Activated CD4-positive, alpha-beta T cell treated with anti-CD3 and anti-CD28 coated beads for 36 hours (primary cell): ENCODE measurements at regions of chr7 and their contacts with region 1.

Region 1: GRCh38 chr7:124349443-124349842 is 316.6 kb upstream of the TMEM229A start:
- DNase-seq: no peak
- ATAC-seq: no peak
- H3K4me3 Mint-ChIP-seq: no peak overlapping the region
- H3K27ac Mint-ChIP-seq: no peak overlapping the region
- H3K4me1 Mint-ChIP-seq: no peaks in the 10 kb centered on the region
- H3K27me3 Mint-ChIP-seq: no peaks in the 10 kb centered on the region

Region 2: DNA sequence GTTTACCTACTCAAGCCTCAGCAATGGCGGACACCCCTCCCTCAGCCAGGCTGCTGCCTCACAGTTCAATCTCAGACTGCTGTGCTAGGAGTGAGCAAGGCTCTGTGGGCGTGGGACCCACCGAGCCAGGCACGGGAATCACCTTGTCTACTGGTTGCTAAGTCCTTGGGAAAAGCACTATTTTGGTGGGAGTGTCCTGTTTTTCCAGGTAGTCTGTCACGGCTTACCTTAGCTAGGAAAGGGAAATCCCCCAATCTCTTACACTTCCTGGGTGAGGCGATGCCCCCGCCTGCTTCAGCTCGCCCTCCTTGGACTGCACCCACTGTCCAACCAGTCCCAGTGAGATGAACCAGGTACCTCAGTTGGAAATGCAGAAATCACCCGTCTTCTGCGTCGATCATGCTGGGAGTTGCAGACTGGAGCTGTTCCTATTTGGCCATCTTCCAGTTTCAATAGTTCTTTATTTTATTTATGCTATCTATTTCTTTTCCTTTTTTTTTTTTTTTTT is 504.7 kb before region 1 on chr7 and contains the start of gene HYAL4:
- CTCF ChIA-PET with region 1: no interaction called
- POLR2A ChIA-PET with region 1: no interaction called
- intact Hi-C with region 1: no loop called
- DNase-seq: no peak
- ATAC-seq: no peak
- H3K4me3 Mint-ChIP-seq: no peak within 1 kb of the TSS
- H3K27ac Mint-ChIP-seq: no peak within 1 kb of the TSS
- H3K4me1 Mint-ChIP-seq: no peaks in the 10 kb centered on the region
- H3K27me3 Mint-ChIP-seq: peaks cover 16% of the 10 kb centered on the region
- total RNA-seq, gene HYAL4: 0.25 TPM in 1 of 2 experiments, not detected in the other

Region 3: DNA sequence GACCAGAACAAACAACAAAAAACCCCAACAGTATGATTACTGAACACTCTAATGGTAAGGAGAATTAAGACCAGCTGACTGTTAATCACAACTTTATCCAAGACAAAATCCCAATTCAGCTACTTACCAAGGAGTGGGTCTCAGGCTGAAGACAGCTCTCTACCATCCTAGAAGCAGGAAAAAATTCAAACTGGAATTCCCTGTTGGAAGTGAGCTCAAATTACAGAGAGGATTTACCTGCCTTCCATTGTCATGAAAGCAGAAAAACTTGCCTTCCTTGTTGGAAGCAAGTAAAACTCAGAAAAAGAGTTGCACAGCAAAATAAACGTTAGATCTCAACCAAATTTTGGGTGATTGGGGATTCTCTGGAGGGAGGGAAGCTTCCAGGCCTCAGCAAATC is 403.5 kb before region 1 on chr7:
- CTCF ChIA-PET with region 1: no interaction called
- POLR2A ChIA-PET with region 1: no interaction called
- intact Hi-C with region 1: loop called in 1 of 2 experiments (anchors 5 kb)
- DNase-seq: no peak
- ATAC-seq: no peak
- H3K4me3 Mint-ChIP-seq: no peak overlapping the region
- H3K27ac Mint-ChIP-seq: no peak overlapping the region
- H3K4me1 Mint-ChIP-seq: no peaks in the 10 kb centered on the region
- H3K27me3 Mint-ChIP-seq: peaks cover 9% of the 10 kb centered on the region

Region 4: GRCh38 chr7:124032369-124033094 is 316.9 kb before region 1 on chr7 and contains the start of gene TMEM229A:
- CTCF ChIA-PET with region 1: no interaction called
- POLR2A ChIA-PET with region 1: no interaction called
- intact Hi-C with region 1: no loop called
- DNase-seq: peak; percentile 29
- ATAC-seq: peak; percentile 61
- H3K4me3 Mint-ChIP-seq: no peak within 1 kb of the TSS
- H3K27ac Mint-ChIP-seq: no peak within 1 kb of the TSS
- H3K4me1 Mint-ChIP-seq: peaks cover 5% of the 10 kb centered on the region
- H3K27me3 Mint-ChIP-seq: peaks cover 54% of the 10 kb centered on the region
- total RNA-seq, gene TMEM229A: not detected

Region 5: DNA sequence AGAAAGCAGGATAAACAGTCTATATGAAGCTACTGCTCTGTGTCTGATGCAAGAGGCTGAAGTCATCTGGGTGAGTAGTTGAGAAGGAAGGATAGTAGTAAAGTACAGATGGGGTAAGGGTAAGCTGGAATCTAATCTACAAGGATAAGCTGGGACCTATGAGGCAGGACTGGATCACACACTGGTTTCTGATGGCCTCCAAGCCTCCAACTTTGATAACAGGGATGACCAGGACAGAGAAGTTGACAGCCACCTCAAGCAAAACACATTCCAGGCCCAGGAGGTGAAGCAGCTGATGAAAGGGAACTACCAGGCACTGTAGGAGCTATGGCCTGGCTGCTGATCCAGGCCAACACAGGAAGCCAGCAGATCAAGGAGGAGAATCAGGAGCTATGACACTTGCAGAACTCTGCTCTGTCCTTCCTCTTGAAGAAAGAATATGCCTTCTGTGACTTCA is 38.5 kb before region 1 on chr7:
- CTCF ChIA-PET with region 1: no interaction called
- POLR2A ChIA-PET with region 1: no interaction called
- intact Hi-C with region 1: no loop called
- DNase-seq: no peak
- ATAC-seq: no peak
- H3K4me3 Mint-ChIP-seq: no peak overlapping the region
- H3K27ac Mint-ChIP-seq: no peak overlapping the region
- H3K4me1 Mint-ChIP-seq: no peaks in the 10 kb centered on the region
- H3K27me3 Mint-ChIP-seq: no peaks in the 10 kb centered on the region

Region 6: GRCh38 chr7:124457841-124458240 is 108.4 kb after region 1 on chr7:
- CTCF ChIA-PET with region 1: no interaction called
- POLR2A ChIA-PET with region 1: no interaction called
- intact Hi-C with region 1: no loop called
- DNase-seq: no peak
- ATAC-seq: no peak
- H3K4me3 Mint-ChIP-seq: no peak overlapping the region
- H3K27ac Mint-ChIP-seq: no peak overlapping the region
- H3K4me1 Mint-ChIP-seq: no peaks in the 10 kb centered on the region
- H3K27me3 Mint-ChIP-seq: no peaks in the 10 kb centered on the region